Vagina (tissue), 2 donors: ENCODE measurements at regions of chr5 and their contacts with region 1.

Region 1: DNA sequence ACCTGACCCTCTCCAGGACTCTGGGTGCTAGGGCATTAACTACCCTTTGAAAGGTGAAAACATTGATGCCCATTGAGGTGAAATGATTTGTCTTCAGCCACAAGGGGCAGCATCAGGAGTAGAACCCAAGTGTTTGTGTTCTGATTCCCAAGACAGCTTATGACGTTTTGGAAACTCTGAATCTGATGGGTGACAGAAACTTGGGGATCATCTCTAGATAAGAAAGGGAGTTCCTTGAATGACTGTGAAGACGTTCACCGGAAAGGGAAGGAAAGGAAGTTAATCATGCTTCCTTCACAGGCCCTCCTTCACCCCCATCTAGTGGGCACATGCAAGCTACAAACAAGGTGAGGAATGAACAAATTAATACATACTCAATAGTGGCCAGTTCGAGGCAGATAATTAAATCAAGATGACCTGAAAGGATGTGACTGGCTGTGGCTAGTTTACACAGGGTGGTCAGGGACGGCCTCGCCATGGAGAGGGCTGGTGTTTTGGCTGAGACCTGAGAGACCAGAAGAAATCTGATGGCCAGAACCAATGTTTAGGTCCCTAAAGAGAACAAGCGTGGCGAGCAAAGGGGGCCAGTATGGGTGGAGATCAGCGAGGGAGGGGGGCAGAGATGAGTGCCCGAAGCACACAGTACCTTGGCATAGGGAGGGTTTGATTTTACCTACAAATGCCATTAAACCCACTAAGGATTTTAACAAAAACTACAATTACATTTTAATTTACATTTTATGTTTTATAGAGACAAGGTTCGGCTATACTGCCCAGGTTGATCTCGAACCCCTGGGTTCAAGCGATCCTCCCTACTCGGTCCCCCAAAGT is 937 bp upstream of the SLC26A2 start:
- DNase-seq: no peak
- H3K4me3 ChIP-seq: peak overlapping the region; percentile 68 to 94
- H3K27ac ChIP-seq: peak overlapping the region; percentile 90
- H3K4me1 ChIP-seq: peaks cover 26% of the 10 kb centered on the region
- H3K27me3 ChIP-seq: no peaks in the 10 kb centered on the region
- CTCF ChIP-seq: no peak
- POLR2A ChIP-seq: no peak

Region 2: DNA sequence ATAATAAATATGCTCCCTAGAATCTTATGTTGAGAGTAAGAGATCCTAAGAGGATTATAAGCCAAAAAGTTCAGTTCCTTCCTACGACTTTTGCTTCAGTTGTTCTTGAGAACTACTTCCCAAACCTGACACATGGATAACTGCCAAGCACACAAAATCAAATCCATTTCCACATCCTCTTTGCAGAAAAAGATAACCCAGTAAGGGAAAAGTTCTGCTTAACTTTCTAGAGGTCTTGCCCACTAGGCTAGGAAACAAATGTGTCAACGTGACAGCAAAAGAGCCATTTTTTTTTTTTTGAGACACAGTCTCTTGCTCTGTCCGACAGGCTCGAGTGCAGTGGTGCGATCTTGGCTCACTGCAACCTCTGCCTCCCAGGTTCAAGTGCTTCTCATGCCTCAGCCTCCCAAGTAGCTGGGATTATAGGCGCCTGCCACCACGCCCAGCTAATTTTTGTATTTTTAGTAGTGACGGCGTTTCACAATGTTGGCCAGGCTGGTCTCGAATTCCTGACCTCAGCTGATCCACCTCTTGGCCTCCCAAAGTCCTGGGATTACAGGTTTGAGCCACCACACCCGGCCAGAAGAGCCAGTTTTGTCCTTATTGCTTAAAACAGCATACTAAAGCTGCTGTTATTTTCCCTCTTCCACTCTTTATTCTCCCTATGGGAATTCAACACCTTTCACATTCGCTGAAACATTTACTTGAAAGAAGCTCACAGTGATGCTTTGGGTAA is 432.6 kb before region 1 on chr5:
- intact Hi-C with region 1: no loop called
- DNase-seq: no peak
- H3K4me3 ChIP-seq: no peak overlapping the region
- H3K27ac ChIP-seq: no peak overlapping the region
- H3K4me1 ChIP-seq: peaks cover 87% of the 10 kb centered on the region
- H3K27me3 ChIP-seq: no peaks in the 10 kb centered on the region
- CTCF ChIP-seq: no peak
- POLR2A ChIP-seq: no peak

Region 3: GRCh38 chr5:149828161-149828884 is 131.3 kb before region 1 on chr5:
- intact Hi-C with region 1: no loop called
- DNase-seq: no peak
- H3K4me3 ChIP-seq: no peak overlapping the region
- H3K27ac ChIP-seq: peak overlapping the region; percentile 30
- H3K4me1 ChIP-seq: peaks cover 20% of the 10 kb centered on the region
- H3K27me3 ChIP-seq: no peaks in the 10 kb centered on the region
- CTCF ChIP-seq: peak; percentile 76 to 88 (median 80)
- POLR2A ChIP-seq: no peak

Region 4: GRCh38 chr5:150409638-150410523 is 450.3 kb after region 1 on chr5:
- intact Hi-C with region 1: loop called (anchors 10 kb)
- DNase-seq: peak in 1 of 2 donors; percentile 94
- H3K4me3 ChIP-seq: peak overlapping the region; percentile 21 to 35
- H3K27ac ChIP-seq: peak overlapping the region; percentile 78
- H3K4me1 ChIP-seq: peaks cover 15% of the 10 kb centered on the region
- H3K27me3 ChIP-seq: no peaks in the 10 kb centered on the region
- CTCF ChIP-seq: no peak
- POLR2A ChIP-seq: peak in 1 of 2 donors; percentile 14

Region 5: DNA sequence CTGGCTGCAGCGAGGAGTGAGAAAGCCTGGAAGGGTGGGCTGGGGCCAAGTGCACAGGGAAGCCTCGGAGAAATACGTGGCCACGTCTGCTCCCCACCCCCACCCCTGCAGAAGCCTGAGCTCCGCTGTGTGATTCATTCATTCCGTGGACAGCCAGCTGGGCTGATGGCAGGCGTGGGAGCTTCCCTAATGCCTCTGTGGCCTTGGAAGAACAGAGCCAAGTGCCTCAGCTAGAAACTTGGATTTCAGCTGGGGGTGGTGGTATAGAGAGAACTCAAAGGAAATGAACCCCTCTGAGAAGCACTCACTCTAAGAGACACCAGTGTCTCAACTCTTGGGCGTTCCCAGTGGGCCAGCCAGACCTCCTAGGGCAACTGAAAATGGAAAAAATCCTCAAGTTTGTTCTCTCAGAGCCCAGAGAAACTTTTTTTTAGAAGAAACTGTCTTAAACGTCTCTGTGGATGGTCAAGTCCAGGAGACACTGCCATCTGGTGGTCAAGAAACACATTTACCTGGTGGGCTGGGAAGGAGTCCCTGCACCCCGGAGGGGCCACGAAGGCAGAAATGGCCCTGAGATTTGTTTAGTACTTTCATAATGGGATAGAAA is 1780.8 kb after region 1 on chr5:
- intact Hi-C with region 1: no loop called
- DNase-seq: peak in 1 of 2 donors; percentile 93
- H3K4me3 ChIP-seq: peak overlapping the region in 1 of 2 donors; percentile 7
- H3K27ac ChIP-seq: peak overlapping the region; percentile 81
- H3K4me1 ChIP-seq: peaks cover 46% of the 10 kb centered on the region
- H3K27me3 ChIP-seq: no peaks in the 10 kb centered on the region
- CTCF ChIP-seq: peak; percentile 95 to 98 (median 96)
- POLR2A ChIP-seq: no peak